ENCODE measurements at regions of chr12 and their contacts with region 1.

Region 1: GRCh38 chr12:6335451-6336078 is 6.3 kb downstream of the TNFRSF1A start:
- DNase-seq: peak; percentile 60 to 95 (median 78)
- H3K4me3 ChIP-seq: peak overlapping the region; percentile 24 to 92 (median 54)
- H3K27ac ChIP-seq: peak overlapping the region; percentile 97
- H3K4me1 ChIP-seq: peaks cover 2 to 57% (median 50%) of the 10 kb centered on the region in 3 donors
- H3K27me3 ChIP-seq: no peaks in the 10 kb centered on the region
- CTCF ChIP-seq: peak; percentile 38

Region 2: DNA sequence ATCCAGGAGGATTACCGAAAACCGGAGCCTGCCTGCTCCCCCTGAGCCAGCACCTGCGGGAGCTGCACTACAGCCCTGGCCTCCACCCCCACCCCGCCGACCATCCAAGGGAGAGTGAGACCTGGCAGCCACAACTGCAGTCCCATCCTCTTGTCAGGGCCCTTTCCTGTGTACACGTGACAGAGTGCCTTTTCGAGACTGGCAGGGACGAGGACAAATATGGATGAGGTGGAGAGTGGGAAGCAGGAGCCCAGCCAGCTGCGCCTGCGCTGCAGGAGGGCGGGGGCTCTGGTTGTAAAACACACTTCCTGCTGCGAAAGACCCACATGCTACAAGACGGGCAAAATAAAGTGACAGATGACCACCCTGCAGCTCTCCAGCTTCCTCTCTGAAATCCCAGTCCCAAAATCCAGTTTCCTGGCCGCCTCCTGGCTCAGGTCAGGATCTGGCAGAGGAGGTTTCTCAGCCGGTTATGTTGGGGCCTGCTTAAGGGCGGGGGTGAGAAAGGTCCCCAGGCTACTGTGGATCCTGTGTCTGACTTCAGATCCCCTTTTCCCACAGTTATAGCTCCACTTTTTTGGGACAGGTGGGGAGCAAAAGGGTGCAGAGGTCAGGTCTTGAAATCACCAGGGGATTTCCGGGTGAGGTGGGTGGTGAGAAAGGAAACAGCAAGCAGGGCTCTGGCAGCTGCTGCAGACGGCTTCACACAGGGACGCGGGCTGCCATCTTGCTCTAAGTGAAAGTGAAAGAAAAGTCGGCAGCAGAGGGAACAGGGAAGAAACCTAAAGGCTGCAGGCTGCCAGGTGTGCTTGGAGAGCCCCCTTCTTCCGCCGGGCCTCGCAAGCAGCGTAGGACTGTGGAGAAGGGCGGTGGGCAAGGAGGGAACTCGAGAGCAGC is 116.0 kb after region 1 on chr12 and contains the start of gene TAPBPL:
- intact Hi-C with region 1: loop called (anchors 10 kb)
- DNase-seq: peak; percentile 90 to 96 (median 93)
- H3K4me3 ChIP-seq: peak within 1 kb of the TSS; percentile 77 to 92 (median 88)
- H3K27ac ChIP-seq: peak within 1 kb of the TSS; percentile 99
- H3K4me1 ChIP-seq: peaks cover 3 to 24% (median 17%) of the 10 kb centered on the region in 3 donors
- H3K27me3 ChIP-seq: no peaks in the 10 kb centered on the region
- CTCF ChIP-seq: no peak
- total RNA-seq, gene TAPBPL: 44.7 TPM

Measured in kidney (tissue), 22 donors.